GM13977 (cell line): ENCODE measurements at regions of chr16 and their contacts with region 1.

Region 1: DNA sequence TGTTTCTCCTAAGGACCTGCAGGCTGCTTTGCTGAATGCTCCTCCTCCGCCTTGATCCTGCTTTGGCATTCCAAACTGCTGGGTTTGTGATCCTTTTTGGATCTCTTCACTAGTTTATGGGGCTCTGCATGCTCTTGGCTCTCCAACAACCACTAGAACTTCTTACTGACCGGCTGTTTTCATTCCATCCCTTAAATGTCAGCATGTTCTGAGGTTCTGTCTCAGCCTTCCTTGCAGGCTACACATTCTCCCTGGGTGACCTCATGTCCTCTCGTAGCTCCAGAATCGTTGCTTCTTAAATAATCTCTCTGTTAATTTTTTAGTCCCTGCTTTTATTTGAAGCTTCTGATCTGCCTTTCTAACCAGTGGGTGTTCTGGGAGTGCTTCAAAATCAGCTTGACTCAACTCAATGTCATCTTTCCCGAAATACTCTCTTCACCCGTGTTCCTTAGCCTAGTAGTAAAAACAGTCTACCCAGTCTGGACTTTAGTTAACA is 119.0 kb upstream of the HS3ST2 start:
- DNase-seq: no peak
- CTCF ChIP-seq: no peak

Region 2: DNA sequence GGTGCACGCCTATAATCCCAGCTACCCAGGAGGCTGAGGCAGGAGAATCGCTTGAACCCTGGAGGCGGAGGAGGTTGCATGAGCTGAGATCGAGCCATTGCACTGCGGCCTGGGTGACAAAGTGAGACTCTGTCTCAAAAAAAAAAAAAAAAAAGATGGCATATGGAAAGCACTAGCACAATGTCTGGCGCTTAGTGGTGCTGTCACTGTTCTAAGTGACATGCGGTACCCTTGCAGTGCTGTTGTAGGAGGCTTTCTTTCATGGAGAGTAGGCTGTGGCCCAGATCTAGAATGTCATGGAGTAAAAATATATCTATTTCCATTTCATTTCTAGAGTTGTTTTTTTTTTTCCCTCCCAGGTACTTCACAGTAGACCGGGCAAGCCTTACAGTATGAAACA is 1110.1 kb before region 1 on chr16:
- in situ Hi-C with region 1: loop called (anchors 5 kb)
- DNase-seq: no peak
- CTCF ChIP-seq: no peak

Region 3: DNA sequence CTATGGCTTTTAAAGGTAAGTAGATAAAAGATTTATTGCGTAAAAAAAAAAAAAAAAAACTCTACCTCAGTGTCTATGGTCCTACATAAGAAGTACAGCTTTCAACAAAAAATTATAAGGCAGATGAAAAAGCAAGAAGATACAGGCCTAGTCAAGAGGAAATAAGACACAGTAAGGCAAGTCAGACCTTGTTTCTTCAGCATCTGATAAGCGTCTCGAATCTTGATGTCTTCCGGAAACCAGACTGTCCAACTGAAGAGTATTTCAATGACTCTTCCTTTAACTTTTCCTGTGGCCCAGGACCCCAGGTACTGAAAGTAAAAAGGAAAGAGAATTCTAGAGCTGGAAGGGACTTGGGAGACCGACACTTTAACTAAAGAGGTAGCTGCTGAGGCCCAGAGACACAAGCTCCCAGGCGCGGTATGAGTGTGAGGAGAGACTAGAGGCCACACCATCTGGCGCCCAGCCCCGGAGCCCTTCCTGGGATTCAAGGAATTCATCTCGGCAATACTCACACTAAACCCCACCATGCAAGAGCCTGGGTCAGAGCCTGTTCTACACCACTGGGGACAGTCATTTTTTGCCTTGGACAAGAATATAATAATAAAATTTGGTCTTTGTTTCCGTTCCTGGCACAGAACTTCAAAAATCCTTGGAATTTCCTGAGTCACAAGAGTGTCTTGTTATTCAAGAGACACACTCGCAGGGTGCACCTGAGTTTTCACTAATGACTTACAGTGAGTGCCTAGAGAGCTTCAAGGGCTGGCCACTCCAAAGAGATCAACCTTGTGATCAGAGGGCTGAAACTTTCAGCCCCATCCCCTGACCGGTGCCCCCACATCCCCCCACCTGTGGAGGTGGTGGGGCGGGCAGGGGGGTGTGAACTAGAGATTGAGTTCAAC is 796.8 kb after region 1 on chr16:
- in situ Hi-C with region 1: no loop called
- DNase-seq: no peak
- CTCF ChIP-seq: no peak